ENCODE measurements at regions of chr12 and their contacts with region 1.

Region 1: DNA sequence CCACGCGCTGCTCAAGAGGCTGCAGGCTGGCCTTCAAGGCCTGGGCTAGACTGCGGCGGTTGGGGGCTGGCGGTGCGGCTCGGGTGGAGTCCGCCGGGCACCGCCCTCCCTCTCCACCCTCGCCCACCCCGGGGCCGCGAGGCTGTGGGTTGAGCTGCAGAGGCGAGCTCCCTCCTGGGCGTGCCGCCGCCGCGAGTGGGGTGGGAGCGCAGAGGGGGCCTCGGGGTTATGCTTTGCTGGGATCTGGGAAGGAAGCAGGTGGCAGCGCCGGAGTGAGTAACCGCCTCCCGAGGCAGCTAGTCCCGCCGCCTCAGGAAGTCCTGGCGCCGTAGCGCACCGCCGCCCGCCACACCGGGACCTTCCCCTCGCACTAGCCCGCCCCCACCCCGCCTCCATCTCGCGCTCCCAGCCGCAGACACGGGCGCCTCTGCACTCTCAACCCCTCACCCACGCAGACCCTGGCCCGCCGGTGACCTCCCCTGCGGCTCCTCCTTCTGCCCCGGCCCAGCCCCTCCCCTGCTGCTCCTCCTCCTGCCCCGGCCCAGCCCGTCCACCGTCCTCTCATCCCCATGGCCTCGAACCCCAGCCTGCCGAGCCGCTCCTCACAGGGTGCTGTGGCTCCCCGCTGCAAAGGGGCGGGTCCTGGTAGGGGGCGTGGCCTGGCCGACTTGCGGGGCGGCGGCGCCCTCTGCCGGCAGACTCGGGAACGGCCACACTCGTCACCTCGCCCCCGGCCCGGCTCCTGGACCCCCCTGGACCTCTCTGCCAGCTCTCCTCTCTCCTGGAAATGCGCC is 16.6 kb downstream of the TAMALIN start:
- DNase-seq: peak; percentile 85
- H3K27ac ChIP-seq: no peak overlapping the region
- CTCF ChIP-seq: peak; percentile 96

Region 2: DNA sequence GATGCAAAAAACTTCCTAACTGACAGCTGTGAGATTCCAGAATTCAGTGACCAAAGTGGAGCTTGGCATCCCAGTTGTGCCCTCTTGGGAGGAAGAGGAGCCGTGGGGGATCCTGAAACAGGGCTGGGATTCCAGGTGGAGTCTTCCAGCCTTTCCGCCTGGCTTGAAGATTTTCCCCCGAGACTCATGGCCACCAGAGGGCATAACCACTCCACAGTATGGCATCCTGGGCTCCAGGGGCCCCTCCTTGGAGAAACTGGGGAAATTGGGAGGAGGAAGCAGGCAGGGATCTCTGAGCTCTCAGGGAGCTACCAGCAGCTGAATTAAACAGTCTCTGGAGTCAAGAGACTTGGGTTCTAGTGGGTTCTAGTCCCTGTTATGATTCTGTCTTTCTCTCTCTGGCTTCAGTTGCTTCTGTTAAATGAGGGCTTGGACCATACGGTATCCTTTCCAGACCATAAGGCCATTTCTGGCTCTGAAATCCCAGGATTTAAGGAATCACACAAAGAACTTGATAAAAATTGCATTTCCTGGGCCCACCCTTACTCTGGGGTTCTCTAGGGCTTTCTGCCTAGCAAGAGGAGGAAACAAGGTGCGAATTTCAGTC is 19.2 kb before region 1 on chr12:
- CTCF ChIA-PET with region 1: interaction called, 75 read pairs
- POLR2A ChIA-PET with region 1: no interaction called
- DNase-seq: peak; percentile 62
- H3K27ac ChIP-seq: no peak overlapping the region
- CTCF ChIP-seq: peak; percentile 59

Region 3: DNA sequence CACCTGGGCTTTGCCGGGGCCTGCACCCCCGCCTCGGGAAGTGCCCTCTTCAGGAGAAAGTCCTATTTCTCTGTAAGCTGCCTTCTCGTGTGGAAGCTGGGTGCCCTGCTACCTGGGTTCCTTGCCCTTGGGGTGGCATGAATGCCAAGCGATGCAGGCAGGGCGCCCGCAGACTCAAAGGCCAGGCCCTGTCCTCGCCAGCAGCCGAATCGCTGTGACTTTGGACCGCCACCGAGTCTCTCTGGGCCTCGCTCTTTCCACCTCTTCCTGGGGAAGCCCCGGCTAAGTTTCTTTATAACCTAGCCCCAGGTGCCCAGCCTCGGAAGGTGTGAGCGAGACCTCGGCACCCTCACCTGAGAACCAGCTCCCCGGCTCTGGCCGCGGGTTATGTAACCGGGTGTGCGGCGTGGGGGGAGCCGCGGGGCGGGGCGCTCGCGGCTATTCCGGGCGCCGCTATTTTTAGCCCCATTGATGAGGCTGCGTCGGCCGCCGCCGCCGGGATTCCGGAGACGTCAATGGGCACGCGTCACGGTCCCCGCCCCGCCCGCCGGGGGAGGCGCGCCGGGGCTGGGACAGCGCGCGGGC is 13.3 kb after region 1 on chr12:
- CTCF ChIA-PET with region 1: interaction called, 13 read pairs
- POLR2A ChIA-PET with region 1: no interaction called
- DNase-seq: peak; percentile 72
- H3K27ac ChIP-seq: peak overlapping the region; percentile 51
- CTCF ChIP-seq: no peak

Region 4: DNA sequence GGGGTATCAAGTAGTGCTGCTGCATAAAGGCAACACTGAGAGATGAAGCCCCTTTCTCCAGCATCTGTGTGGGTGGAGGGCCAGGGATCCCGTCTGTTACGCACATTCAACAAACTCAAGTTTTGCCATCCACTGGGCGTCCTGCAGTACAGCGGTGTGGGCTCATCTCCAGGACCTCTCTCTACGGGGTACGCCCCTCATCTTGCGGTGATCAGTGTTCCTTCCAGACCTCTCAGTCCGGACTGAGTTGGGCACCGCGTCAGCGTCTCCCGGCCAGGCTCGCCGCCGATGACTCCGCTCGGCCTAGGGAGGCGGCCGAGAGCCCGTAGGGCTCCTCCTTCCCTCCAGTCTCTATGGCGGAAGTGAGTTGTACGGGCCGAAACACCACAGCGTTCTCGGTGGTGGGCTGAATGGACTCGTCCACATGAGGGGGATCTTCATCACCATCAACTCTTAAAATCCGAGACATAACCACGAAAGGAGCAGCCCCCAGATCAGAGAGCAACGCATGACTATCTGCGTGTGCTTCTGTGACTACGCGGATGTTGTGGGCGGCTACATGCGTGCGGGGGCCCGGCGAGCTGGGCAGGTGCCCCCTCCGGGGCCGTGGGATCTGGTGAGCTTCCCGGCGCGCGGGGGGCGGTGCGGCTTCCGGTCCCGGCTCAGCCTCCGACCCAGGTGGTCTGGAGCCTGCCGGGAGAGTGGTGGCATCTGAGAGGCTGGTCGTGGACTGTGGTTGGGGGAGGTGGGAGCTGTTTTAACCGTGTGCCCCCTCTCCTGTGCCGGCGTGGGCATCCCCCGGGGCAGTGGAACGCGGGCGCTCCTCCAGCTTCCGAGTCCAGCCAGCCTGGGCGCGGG is 46.2 kb after region 1 on chr12 and contains the start of gene ATG101:
- CTCF ChIA-PET with region 1: interaction called, 29 read pairs
- POLR2A ChIA-PET with region 1: no interaction called
- DNase-seq: peak; percentile 95
- H3K27ac ChIP-seq: peak within 1 kb of the TSS; percentile 78
- CTCF ChIP-seq: peak; percentile 88

Region 5: DNA sequence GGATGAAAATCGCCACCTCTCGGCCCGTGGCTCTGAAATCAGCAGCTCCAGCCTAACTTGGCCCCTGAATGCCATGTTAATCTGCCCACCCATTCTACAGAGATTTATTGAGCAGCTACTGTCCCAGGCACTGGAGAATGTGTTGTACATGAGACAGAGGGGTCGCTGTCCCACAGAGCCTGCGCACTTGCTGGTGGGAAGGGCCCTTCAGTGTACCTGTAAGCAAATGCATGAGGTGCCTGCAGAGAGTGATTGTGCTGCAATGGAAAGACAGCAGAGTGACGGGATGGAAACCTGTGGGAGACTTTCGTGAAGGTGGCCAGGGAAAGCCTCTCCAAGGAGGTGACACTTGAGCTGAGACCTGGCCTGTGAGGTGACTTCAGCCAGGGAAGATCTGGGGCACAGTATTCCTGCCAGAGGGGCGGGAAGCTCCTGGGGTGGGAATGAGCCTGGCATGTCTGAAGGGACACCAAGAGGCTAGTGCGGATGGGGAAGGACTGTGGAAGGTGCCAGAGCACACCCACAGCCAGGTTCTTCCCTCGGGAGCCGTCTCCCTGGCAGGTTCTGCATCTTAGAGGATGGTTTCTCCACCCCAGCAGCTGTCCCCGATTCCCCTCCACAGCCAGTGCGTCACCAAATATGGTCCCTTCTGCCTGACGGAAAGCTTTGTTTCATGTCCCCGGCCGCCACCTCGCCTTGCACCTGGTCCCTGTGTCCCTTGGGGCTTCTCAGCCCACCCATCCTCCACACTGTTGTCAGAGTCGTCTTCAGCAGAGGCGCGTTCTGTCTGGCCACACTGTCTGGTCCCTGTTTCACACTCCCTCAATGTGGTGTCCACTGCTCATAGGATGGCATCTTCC is 64.8 kb after region 1 on chr12:
- CTCF ChIA-PET with region 1: interaction called, 56 read pairs
- POLR2A ChIA-PET with region 1: no interaction called
- DNase-seq: no peak
- H3K27ac ChIP-seq: no peak overlapping the region
- CTCF ChIP-seq: no peak

Measured in RWPE1 (cell line).